ENCODE measurements at regions of chr2 and their contacts with region 1.

Region 1: GRCh38 chr2:53422979-53423378 is 344.6 kb upstream of the CHAC2 start:
- DNase-seq: no peak
- H3K4me3 ChIP-seq: no peak overlapping the region
- CTCF ChIP-seq: peak; percentile 36

Region 2: GRCh38 chr2:53407363-53408080 is 15.5 kb before region 1 on chr2:
- CTCF ChIA-PET with region 1: interaction called, 10 read pairs
- POLR2A ChIA-PET with region 1: no interaction called
- DNase-seq: no peak
- H3K4me3 ChIP-seq: no peak overlapping the region
- CTCF ChIP-seq: no peak

Region 3: DNA sequence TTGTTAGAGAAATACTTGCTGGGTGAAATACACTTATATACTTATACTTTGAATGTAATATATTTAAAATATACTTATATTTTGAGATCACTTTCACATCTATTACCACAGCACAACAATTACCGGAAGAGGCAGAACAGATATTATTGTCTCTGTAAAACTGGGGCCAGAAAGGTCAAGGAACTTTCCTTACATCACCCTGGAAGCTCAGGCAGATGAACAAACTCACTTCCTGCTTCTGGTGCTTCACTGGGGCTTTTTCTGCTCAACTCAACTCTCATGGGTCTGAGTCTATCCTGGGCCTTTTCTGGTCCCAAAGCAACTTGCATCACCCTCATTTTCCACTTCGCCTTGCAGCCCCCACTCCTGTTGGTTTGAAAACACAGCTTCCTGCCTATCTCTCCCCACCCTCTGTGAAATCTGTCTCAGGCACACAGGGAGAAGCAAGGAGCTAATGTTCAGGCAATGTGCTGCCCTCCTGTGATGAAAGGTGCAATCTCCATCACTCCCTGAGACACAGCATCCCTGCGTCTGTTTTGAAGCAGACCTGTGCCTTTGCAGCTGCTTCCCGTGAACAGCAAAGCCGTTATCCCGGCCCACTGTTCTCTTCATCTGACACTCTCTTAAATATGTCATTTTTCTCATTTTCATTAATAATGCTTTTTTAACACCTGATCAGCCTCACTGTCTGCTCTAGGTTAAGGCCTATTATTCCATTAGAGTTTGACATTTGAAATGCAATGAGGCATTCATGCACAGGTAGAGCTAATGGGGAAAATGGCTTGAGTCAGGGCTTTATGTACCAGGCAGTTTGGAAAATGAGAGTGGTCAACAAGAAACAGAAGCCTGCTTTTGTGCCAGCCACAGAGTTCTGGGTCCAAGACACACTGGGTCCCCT is 92.7 kb after region 1 on chr2:
- CTCF ChIA-PET with region 1: interaction called, 12 read pairs
- POLR2A ChIA-PET with region 1: no interaction called
- DNase-seq: no peak
- H3K4me3 ChIP-seq: no peak overlapping the region
- CTCF ChIP-seq: peak; percentile 1

Region 4: GRCh38 chr2:53527056-53527455 is 104.1 kb after region 1 on chr2:
- CTCF ChIA-PET with region 1: no interaction called
- POLR2A ChIA-PET with region 1: no interaction called
- DNase-seq: no peak
- H3K4me3 ChIP-seq: no peak overlapping the region
- CTCF ChIP-seq: no peak

Region 5: DNA sequence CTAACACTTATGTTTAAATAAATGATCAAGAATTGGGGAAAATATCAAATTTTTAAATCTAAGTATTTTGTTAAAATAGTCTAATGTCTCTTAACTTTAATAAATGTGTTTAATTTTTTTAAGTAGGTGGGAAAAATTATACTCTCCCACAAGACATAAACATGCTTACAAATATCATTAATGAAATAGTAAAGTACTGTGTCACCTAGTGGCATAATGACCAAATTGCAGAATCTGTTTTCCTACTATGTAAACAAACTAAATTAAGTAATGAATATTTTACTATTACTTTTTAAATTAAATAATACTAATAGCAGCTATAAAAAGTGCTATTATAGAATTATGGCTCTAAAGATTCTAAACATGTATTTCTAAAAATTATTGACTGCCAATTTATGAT is 292.6 kb after region 1 on chr2:
- CTCF ChIA-PET with region 1: interaction called, 15 read pairs
- POLR2A ChIA-PET with region 1: no interaction called
- DNase-seq: no peak
- H3K4me3 ChIP-seq: no peak overlapping the region
- CTCF ChIP-seq: peak; percentile 9

Region 6: DNA sequence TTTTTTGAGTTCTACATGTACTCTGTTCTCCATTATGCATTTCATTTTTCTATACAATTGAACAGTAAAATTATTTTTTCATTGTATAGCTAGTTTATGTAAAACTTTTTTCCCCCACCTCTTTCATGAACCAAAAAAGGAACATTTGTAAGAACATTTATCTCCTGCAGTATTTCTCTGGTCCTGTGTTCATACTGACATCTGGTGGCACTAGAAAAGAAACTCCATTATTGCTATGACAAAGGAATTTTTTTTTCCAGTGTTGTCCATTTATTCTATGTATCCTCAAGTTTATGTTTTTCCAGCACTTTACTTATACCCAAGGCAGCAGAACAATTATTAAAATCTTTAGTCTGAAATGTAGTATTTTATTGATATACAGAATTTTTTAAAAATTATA is 317.2 kb after region 1 on chr2:
- CTCF ChIA-PET with region 1: interaction called, 45 read pairs
- POLR2A ChIA-PET with region 1: no interaction called
- DNase-seq: no peak
- H3K4me3 ChIP-seq: no peak overlapping the region
- CTCF ChIP-seq: peak; percentile 30